MCF 10A (cell line): ENCODE measurements at regions of chr7 and their contacts with region 1.

Region 1: GRCh38 chr7:49001610-49002033 is 77.3 kb downstream of the CDC14C start:
- DNase-seq: peak; percentile 64
- H3K4me3 Mint-ChIP-seq: no peak overlapping the region
- H3K27ac Mint-ChIP-seq: no peak overlapping the region
- H3K4me1 Mint-ChIP-seq: no peaks in the 10 kb centered on the region
- H3K27me3 Mint-ChIP-seq: peaks cover 31% of the 10 kb centered on the region
- CTCF ChIP-seq: peak; percentile 56

Region 2: GRCh38 chr7:49023345-49024328 is 22.0 kb after region 1 on chr7:
- CTCF ChIA-PET with region 1: no interaction called
- POLR2A ChIA-PET with region 1: no interaction called
- intact Hi-C with region 1: no loop called
- DNase-seq: no peak
- H3K4me3 Mint-ChIP-seq: no peak overlapping the region
- H3K27ac Mint-ChIP-seq: no peak overlapping the region
- H3K4me1 Mint-ChIP-seq: no peaks in the 10 kb centered on the region
- H3K27me3 Mint-ChIP-seq: peaks cover 82% of the 10 kb centered on the region
- CTCF ChIP-seq: no peak

Region 3: GRCh38 chr7:49166441-49166840 is 164.8 kb after region 1 on chr7:
- CTCF ChIA-PET with region 1: no interaction called
- POLR2A ChIA-PET with region 1: no interaction called
- intact Hi-C with region 1: loop called (anchors 2 kb)
- DNase-seq: peak; percentile 25
- H3K4me3 Mint-ChIP-seq: no peak overlapping the region
- H3K27ac Mint-ChIP-seq: no peak overlapping the region
- H3K4me1 Mint-ChIP-seq: no peaks in the 10 kb centered on the region
- H3K27me3 Mint-ChIP-seq: peaks cover 72% of the 10 kb centered on the region
- CTCF ChIP-seq: peak; percentile 12